Activated CD4-positive, alpha-beta T cell treated with anti-CD3 and anti-CD28 coated beads, Interleukin-2, amount 10 ng/mL, durations not matched to agents 24 days and 14 days (primary cell): ENCODE measurements at regions of chr7 and their contacts with region 1.

Region 1: DNA sequence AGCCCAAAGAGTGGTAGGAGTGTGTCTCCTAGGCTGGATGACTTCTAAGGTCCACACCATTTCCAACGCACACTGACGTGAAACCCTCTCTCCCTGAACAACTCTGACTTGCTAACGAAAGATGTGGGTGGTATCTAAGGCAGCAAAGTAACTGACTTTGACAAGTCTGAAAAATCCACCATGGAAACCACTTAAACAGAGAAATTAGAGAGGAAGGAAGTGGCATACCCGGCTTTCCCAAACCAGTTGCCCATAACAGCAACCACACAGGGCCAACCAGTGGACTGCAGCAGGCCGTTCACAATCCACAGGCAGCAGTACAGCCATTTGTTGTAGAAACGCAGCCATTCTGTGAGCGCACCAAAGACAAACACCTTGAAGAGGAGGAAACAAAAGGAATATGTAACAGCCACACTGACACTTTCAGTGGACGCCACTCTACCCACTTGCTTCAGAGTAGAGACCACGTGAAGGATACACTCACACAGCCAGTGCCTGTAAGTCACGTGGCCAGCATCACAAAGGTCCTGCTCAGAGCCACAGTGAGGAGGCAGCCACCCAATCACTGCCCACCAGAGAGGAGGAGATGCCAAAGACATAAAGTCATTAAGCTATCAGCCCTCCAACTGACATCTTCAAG is 39.8 kb downstream of the SLC37A3 start:
- DNase-seq: peak; percentile 71
- H3K4me3 Mint-ChIP-seq: peak overlapping the region; percentile 68
- H3K27ac Mint-ChIP-seq: peak overlapping the region; percentile 94
- H3K4me1 Mint-ChIP-seq: peaks cover 28% of the 10 kb centered on the region
- H3K27me3 Mint-ChIP-seq: no peaks in the 10 kb centered on the region

Region 2: GRCh38 chr7:140375892-140376730 is 17.6 kb after region 1 on chr7:
- intact Hi-C with region 1: loop called (anchors 1 kb)
- DNase-seq: peak; percentile 84
- H3K4me3 Mint-ChIP-seq: peak overlapping the region; percentile 78
- H3K27ac Mint-ChIP-seq: peak overlapping the region; percentile 99
- H3K4me1 Mint-ChIP-seq: peaks cover 40% of the 10 kb centered on the region
- H3K27me3 Mint-ChIP-seq: no peaks in the 10 kb centered on the region

Region 3: DNA sequence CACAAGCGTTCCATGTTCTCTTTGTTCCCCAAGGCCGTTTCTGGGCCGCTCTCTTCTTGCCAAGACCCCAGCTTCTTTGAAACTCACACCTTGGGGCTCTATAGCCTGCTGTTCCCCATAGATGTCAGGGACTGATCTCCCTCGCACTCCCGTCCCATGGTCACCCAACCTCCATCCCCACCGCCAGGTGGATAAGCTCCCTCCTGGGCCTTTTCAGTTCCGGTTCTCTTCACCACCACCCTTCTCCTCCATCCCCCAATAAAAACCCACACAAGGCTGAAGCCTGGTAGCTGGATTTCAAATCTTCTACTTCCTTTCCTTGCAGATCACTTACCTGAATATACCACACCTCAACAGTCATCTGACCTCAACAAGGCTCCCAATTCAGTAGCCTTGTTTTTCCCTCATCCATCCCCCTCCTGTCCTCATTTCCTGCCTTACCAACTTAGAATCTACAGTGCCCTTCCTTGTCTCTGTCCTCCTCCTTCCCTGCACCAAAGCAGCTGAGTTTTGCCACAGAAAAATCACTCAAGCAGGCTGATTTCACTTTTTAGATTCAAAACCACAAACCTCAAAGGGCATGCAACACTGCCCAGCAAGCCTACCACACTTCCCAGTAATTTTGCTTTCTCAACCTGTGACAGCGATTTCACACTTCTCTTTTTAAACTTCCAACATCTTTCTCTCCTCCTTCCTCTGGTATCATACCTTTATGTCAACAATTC is 32.1 kb after region 1 on chr7:
- intact Hi-C with region 1: loop called (anchors 2 kb)
- DNase-seq: peak; percentile 68
- H3K4me3 Mint-ChIP-seq: no peak overlapping the region
- H3K27ac Mint-ChIP-seq: no peak overlapping the region
- H3K4me1 Mint-ChIP-seq: peaks cover 7% of the 10 kb centered on the region
- H3K27me3 Mint-ChIP-seq: no peaks in the 10 kb centered on the region

Region 4: DNA sequence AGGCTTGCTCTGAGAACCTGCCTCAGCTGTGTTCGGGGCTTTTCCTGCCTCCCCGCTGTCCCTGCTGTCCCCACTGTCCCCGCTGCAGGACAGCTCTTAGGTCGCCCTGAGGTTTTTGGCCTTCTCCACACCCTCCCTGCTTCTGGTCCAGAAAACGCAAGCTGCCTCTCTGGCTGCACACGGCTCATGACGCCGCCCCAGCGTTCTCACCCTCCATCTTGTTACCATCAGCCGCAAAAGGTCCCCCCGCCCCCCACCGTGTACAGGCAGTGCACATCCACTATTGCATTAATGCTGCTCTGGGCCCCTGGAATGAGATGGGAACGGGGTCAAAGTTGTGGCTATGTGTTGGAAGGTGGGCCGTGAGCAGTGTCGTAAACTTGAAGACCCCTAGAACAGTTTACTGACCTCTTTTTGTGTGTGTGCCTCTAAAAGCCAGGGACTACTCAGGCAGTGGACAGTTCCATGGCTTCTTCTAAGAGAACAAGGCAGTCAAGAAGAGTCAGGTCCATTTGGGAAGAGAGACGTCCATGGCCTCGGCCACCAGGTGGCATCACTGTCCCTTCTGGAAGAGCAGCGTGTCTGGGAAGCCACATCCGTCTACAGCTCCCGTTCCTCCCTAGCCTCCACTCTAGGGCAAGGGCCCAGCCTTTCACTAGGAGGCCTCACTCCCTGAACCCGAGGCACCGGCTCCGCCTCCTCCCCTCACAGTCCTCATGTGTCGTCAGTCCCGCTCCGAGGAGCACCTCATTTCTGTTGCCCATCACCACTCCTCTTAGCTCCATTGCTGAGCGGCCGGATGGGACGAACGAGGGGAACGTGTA is 159.2 kb after region 1 on chr7:
- intact Hi-C with region 1: no loop called
- DNase-seq: peak; percentile 89
- H3K4me3 Mint-ChIP-seq: no peak overlapping the region
- H3K27ac Mint-ChIP-seq: no peak overlapping the region
- H3K4me1 Mint-ChIP-seq: peaks cover 2% of the 10 kb centered on the region
- H3K27me3 Mint-ChIP-seq: peaks cover 9% of the 10 kb centered on the region